ENCODE measurements at regions of chr1 and their contacts with region 1.

Region 1: DNA sequence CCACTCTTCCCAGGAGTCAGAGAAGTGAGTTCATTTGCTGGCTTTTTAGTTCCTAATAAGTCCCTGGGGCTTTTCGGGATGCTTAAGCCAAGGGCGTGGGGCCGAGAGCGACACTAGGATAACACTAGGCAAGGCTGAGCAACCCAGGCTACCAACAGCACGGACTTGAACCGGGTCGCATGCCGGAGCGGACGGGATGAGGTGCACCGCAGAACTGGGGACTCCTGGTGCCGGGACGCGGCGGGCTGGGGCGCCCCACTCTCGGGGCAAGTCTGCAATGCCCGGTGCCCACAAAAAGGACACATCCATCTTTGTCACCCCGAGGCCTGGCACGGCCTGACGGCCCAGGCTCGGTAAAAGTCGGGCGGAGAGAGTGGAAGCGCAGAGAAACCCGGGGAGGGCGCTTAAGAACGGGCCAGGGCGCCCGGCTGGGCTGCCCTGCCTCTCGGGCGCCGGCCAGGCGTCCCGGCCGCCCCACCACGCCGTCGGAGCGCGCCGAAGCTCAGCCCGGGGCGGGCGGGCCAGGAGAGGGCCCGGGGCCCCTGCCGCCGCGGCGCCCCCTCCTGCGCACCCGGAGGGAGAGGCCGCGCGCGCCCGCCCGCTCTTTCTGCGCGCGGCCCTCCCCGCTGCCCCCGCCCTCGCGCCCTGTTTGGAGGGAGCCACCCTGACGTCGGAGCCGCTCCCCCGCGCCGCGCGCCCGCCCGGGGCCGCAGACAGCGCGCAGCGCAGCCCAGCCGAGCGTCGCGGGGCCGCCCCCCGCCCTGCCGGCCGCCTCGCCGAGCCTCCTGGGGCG is at the start of gene NBL1:
- DNase-seq: peak; percentile 82
- H3K4me3 ChIP-seq: peak within 1 kb of the TSS; percentile 59
- H3K27ac ChIP-seq: peak within 1 kb of the TSS; percentile 91
- H3K4me1 ChIP-seq: peaks cover 34% of the 10 kb centered on the region
- H3K27me3 ChIP-seq: no peaks in the 10 kb centered on the region
- CTCF ChIP-seq: no peak
- total RNA-seq, gene NBL1: 340 to 393 TPM

Region 2: GRCh38 chr1:19596714-19597495 is 46.9 kb before region 1 on chr1:
- intact Hi-C with region 1: loop called (anchors 5 kb)
- DNase-seq: peak; percentile 98
- H3K4me3 ChIP-seq: peak overlapping the region; percentile 96
- H3K27ac ChIP-seq: peak overlapping the region; percentile 96
- H3K4me1 ChIP-seq: peaks cover 3% of the 10 kb centered on the region
- H3K27me3 ChIP-seq: no peaks in the 10 kb centered on the region
- CTCF ChIP-seq: no peak